Activated naive CD4-positive, alpha-beta T cell treated with anti-CD3 and anti-CD28 coated beads for 36 hours (primary cell): ENCODE measurements at regions of chr1 and their contacts with region 1.

Region 1: GRCh38 chr1:198253668-198254067 is 96.9 kb downstream of the NEK7 start:
- DNase-seq: no peak
- H3K4me3 Mint-ChIP-seq: no peak overlapping the region
- H3K27ac Mint-ChIP-seq: no peak overlapping the region
- H3K4me1 Mint-ChIP-seq: peaks cover 46% of the 10 kb centered on the region
- H3K27me3 Mint-ChIP-seq: no peaks in the 10 kb centered on the region

Region 2: GRCh38 chr1:197915862-197916499 is 337.7 kb before region 1 on chr1:
- CTCF ChIA-PET with region 1: no interaction called
- intact Hi-C with region 1: loop called (anchors 2 kb)
- DNase-seq: no peak
- H3K4me3 Mint-ChIP-seq: peak overlapping the region; percentile 55
- H3K27ac Mint-ChIP-seq: no peak overlapping the region
- H3K4me1 Mint-ChIP-seq: peaks cover 77% of the 10 kb centered on the region
- H3K27me3 Mint-ChIP-seq: peaks cover 94% of the 10 kb centered on the region

Region 3: GRCh38 chr1:198088360-198089071 is 165.2 kb before region 1 on chr1:
- CTCF ChIA-PET with region 1: no interaction called
- intact Hi-C with region 1: loop called (anchors 5 kb)
- DNase-seq: peak; percentile 26
- H3K4me3 Mint-ChIP-seq: no peak overlapping the region
- H3K27ac Mint-ChIP-seq: no peak overlapping the region
- H3K4me1 Mint-ChIP-seq: peaks cover 7% of the 10 kb centered on the region
- H3K27me3 Mint-ChIP-seq: no peaks in the 10 kb centered on the region

Region 4: DNA sequence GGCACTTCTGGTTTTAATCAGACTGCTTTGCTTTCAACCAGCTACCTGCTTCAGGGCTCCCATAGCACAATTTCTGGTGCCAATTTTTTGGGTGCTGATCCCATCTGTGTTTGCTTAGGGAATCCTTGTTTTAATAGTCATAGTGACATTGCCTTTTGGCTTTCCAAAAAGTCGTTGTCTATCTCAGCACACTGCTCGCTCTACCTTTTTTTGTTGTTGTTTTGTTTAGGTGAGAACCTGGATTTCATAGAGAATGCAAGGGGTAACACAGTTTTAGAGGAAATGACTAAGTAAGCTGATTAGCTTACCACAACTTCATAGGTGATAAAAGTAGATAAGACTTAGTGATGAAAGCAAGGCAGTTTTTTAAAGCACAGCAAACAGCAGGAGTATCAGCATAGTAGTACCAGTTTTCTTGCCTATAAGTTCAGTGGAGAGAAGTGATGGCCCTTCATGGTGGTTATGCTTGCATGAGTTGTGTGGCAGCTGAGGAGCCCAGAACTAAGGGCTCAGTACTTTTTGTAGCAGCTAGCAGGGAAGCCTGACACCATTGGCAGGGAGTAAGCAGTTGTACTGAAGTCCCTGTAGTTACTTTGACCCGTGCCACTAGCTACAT is 65.6 kb before region 1 on chr1:
- CTCF ChIA-PET with region 1: no interaction called
- intact Hi-C with region 1: loop called (anchors 1 kb)
- DNase-seq: no peak
- H3K4me3 Mint-ChIP-seq: peak overlapping the region; percentile 16
- H3K27ac Mint-ChIP-seq: peak overlapping the region; percentile 20
- H3K4me1 Mint-ChIP-seq: peaks cover 72% of the 10 kb centered on the region
- H3K27me3 Mint-ChIP-seq: no peaks in the 10 kb centered on the region

Region 5: DNA sequence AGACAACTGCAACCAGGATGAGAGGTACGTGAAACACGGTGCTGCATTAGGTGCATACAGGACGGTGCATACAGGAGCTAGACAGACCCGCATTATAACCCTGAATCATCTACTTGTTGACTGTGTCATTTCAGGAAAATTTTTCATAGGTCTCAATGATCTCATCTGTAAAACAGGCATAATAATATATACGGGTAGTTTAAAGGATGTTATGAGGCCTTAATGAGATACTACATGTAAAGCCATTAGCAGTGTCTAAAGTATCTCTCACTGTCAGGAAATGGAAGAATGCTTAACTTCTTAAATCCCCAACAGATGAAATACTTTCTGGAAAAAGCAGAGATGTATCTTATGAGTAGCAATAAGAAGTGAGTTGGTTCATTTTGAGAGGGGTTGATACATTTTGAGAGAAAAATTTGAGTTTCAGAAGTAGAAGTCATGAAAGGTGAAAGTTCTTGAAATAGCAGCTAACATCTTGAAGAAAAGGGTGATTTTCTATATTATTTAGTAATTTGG is 1054.7 kb after region 1 on chr1:
- CTCF ChIA-PET with region 1: no interaction called
- intact Hi-C with region 1: loop called (anchors 1 kb)
- DNase-seq: no peak
- H3K4me3 Mint-ChIP-seq: no peak overlapping the region
- H3K27ac Mint-ChIP-seq: peak overlapping the region; percentile 51
- H3K4me1 Mint-ChIP-seq: peaks cover 31% of the 10 kb centered on the region
- H3K27me3 Mint-ChIP-seq: peaks cover 25% of the 10 kb centered on the region